ENCODE measurements at regions of chr15 and their contacts with region 1.

Region 1: DNA sequence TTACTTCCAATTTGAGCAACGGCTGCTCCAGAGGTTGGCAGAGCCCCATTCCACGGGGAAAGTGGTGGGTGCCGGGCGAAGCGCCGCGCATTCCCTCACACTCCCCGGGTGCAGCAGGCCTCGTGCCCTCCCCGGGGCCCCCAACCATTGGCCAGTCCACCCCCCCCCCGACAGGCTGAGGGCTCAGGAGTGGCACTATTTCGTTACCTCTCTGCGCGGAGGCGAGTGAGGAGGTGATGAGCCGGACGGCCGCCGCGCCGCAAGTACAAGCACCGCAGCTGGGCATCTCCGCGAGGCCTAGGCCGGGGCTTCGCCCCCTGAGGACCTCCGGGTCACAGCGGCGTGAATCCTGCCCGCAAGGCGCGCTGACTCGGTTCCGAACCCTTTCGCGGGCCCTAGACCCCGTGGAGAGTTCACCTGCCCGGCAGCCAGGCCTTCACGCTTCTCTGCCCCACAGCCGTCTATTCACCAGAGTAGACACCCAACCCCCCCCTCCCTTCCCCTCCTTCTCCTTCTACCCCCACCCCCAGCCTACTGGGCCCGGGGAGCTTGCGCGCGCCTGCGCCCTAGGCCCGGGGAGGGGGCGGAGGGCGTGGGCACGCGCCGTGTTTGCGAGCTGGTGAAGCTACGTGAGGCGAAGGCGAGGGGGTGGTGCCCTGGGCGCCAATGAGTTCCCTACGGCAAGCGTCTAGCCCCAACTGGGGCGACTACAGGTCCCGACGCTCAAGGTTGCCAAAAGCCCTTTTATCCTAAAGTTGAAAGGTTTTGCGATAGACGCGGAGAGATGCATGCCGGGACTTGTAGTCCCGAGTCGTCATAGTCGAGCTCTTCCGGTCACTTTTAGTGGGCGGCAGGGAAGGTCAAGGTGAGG is at the start of gene CLPX:
- DNase-seq: peak; percentile 96
- ATAC-seq: peak; percentile 89
- H3K4me3 ChIP-seq: peak within 1 kb of the TSS; percentile 58 to 94 (median 88)
- H3K4me3 Mint-ChIP-seq: peak within 1 kb of the TSS; percentile 96
- H3K27ac ChIP-seq: peak within 1 kb of the TSS; percentile 74 to 88
- H3K27ac Mint-ChIP-seq: peak within 1 kb of the TSS; percentile 97
- H3K4me1 ChIP-seq: peaks cover 17 to 20% of the 10 kb centered on the region in 2 donors
- H3K4me1 Mint-ChIP-seq: peaks cover 26% of the 10 kb centered on the region
- H3K27me3 ChIP-seq: no peaks in the 10 kb centered on the region
- H3K27me3 Mint-ChIP-seq: no peaks in the 10 kb centered on the region
- CTCF ChIP-seq: no peak
- total RNA-seq, gene CLPX: 54.5 and 63.1 TPM in 2 replicates

Region 2: GRCh38 chr15:65133548-65134200 is 51.4 kb before region 1 on chr15 and contains the start of gene PDCD7:
- CTCF ChIA-PET with region 1: no interaction called
- POLR2A ChIA-PET with region 1: interaction called, 6 read pairs
- intact Hi-C with region 1: loop called (anchors 1 kb)
- DNase-seq: peak; percentile 92
- ATAC-seq: peak; percentile 93
- H3K4me3 ChIP-seq: peak within 1 kb of the TSS; percentile 55 to 90 (median 67)
- H3K4me3 Mint-ChIP-seq: peak within 1 kb of the TSS; percentile 93
- H3K27ac ChIP-seq: peak within 1 kb of the TSS; percentile 53 to 88
- H3K27ac Mint-ChIP-seq: peak within 1 kb of the TSS; percentile 95
- H3K4me1 ChIP-seq: peaks cover 13 to 19% of the 10 kb centered on the region in 2 donors
- H3K4me1 Mint-ChIP-seq: peaks cover 28% of the 10 kb centered on the region
- H3K27me3 ChIP-seq: no peaks in the 10 kb centered on the region
- H3K27me3 Mint-ChIP-seq: no peaks in the 10 kb centered on the region
- CTCF ChIP-seq: no peak
- total RNA-seq, gene PDCD7: 43.2 and 47.0 TPM in 2 replicates

Measured in B cell (primary cell).